Tibial artery (tissue), 4 donors: ENCODE measurements at regions of chr3 and their contacts with region 1.

Region 1: DNA sequence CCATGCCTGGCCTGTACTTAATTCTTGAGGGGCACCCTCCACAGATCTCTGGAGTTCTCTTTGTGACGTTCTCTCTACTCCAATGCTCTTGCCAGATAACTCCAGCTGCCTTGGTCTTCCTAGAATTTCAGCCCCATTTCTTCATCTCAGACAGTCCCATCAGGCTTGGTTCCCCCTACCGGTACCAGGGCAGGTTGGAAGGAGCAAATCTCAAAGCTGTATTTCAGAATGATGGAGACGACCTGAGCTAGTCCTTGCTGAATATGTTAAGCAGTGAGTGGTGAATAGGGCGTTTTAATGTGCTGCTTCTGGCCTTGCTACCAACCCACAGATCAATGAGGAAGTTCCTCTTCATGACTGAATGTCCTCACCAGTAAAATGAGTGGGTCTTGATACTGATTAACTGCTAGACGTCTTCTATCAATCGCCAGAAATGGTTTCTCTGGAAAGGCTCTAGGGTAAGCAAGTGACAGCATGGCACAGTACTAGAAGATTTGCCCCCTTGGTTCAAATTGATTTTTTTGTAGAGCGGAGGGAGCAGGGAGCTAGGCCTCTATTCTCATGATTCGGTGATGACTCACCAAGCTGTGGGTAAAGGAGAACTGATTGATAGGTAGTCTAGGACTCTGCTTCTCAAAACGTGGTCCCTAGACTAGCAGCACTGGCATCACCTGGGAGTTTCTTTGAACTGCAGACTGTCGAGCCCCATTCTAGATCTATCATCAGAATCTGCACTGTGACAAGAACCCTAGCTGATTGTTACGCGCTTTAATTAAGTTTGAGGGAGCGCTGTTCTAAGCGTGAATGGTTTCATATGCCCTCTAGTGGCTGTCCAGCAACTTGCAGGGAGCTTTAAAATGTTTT is 67.8 kb downstream of the UBP1 start:
- DNase-seq: peak in 1 of 2 donors; percentile 41
- H3K4me3 ChIP-seq: no peak overlapping the region
- H3K27ac ChIP-seq: peak overlapping the region; percentile 30 to 56
- H3K4me1 ChIP-seq: peaks cover 0 to 11% (median 0%) of the 10 kb centered on the region in 4 donors
- H3K27me3 ChIP-seq: no peaks in the 10 kb centered on the region
- CTCF ChIP-seq: peak; percentile 90 to 94

Region 2: GRCh38 chr3:33218446-33219174 is 153.8 kb before region 1 on chr3 and contains the start of gene SUSD5:
- intact Hi-C with region 1: loop called (anchors 10 kb)
- DNase-seq: peak in 1 of 2 donors; percentile 78
- H3K4me3 ChIP-seq: peak within 1 kb of the TSS; percentile 64 to 73
- H3K27ac ChIP-seq: peak within 1 kb of the TSS; percentile 90 to 94
- H3K4me1 ChIP-seq: peaks cover 0 to 21% (median 6%) of the 10 kb centered on the region in 4 donors
- H3K27me3 ChIP-seq: no peaks in the 10 kb centered on the region
- CTCF ChIP-seq: no peak